ENCODE measurements at regions of chr17 and their contacts with region 1.

Region 1: GRCh38 chr17:40191237-40192208 is 14.3 kb downstream of the RAPGEFL1 start:
- DNase-seq: peak; percentile 71
- ATAC-seq: peak; percentile 94
- H3K4me3 Mint-ChIP-seq: peak overlapping the region; percentile 96
- H3K27ac Mint-ChIP-seq: peak overlapping the region; percentile 79
- H3K4me1 Mint-ChIP-seq: peaks cover 15% of the 10 kb centered on the region
- H3K27me3 Mint-ChIP-seq: peaks cover 3% of the 10 kb centered on the region
- CTCF ChIP-seq: peak; percentile 47

Region 2: DNA sequence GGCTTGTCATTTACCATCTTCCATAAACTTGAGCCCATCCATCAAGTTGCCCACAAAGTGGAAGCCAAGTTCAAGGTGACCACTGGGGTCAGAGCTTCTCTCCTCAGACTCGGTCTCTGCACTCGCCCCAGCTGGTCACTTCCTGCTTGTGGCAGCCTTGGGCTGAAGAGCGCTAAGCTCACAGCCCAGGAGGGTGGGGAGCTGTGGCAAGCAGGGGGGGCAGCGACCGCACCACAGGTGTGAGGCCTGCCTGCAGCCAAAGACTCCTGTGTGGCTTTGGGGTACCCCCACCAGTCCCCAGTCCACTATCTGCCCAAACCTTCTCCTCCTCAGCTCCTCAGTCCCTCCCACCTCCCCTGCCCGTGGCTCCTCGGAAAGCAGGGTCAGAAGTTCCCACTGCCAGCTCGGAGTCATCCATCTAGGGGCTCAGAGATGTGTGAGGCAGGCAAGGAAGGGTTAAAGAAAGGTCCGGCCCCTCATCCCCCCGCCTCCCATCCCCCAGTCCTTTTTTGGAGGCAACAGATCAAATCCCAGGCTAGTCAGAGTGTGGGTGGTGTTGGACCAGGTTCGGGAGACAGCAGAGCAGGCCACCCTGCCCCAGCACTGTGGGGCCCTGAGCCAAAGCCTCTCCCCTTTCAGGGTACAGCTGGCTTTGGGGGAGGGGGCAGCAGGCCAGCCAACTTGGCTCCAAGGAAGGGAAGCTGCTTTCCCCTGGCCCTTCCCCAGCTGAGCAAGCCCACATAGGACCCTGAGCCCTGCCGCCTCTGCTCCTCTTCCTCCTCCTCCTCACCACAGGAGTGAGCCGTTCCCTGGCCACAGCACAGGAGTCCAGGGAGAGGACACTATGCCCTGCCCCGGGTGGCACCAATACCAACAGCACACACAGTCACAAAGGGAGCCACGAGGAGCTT is 173.1 kb before region 1 on chr17:
- CTCF ChIA-PET with region 1: interaction called, 5 read pairs
- POLR2A ChIA-PET with region 1: interaction called, 4 read pairs
- intact Hi-C with region 1: loop called (anchors 1 kb)
- DNase-seq: no peak
- ATAC-seq: no peak
- H3K4me3 Mint-ChIP-seq: no peak overlapping the region
- H3K27ac Mint-ChIP-seq: no peak overlapping the region
- H3K4me1 Mint-ChIP-seq: peaks cover 5% of the 10 kb centered on the region
- H3K27me3 Mint-ChIP-seq: peaks cover 2% of the 10 kb centered on the region
- CTCF ChIP-seq: no peak

Region 3: GRCh38 chr17:40062329-40063186 is 129.0 kb before region 1 on chr17 and contains the start of gene THRA:
- CTCF ChIA-PET with region 1: interaction called, 3 read pairs
- POLR2A ChIA-PET with region 1: no interaction called
- intact Hi-C with region 1: loop called (anchors 2 kb)
- DNase-seq: peak; percentile 79
- ATAC-seq: peak; percentile 93
- H3K4me3 Mint-ChIP-seq: peak within 1 kb of the TSS; percentile 87
- H3K27ac Mint-ChIP-seq: peak within 1 kb of the TSS; percentile 78
- H3K4me1 Mint-ChIP-seq: peaks cover 39% of the 10 kb centered on the region
- H3K27me3 Mint-ChIP-seq: peaks cover under 1% of the 10 kb centered on the region
- CTCF ChIP-seq: no peak
- total RNA-seq, gene THRA: 5.4 and 5.9 TPM in 2 replicates

Region 4: GRCh38 chr17:40168262-40168832 is 23.2 kb before region 1 on chr17:
- CTCF ChIA-PET with region 1: interaction called, 15 read pairs
- POLR2A ChIA-PET with region 1: interaction called, 3 read pairs
- intact Hi-C with region 1: no loop called
- DNase-seq: no peak
- ATAC-seq: peak; percentile 85
- H3K4me3 Mint-ChIP-seq: no peak overlapping the region
- H3K27ac Mint-ChIP-seq: no peak overlapping the region
- H3K4me1 Mint-ChIP-seq: no peaks in the 10 kb centered on the region
- H3K27me3 Mint-ChIP-seq: no peaks in the 10 kb centered on the region
- CTCF ChIP-seq: no peak

Region 5: GRCh38 chr17:40177275-40177874 is 14.1 kb before region 1 on chr17 and contains the start of gene RAPGEFL1:
- CTCF ChIA-PET with region 1: interaction called, 3 read pairs
- POLR2A ChIA-PET with region 1: interaction called, 4 read pairs
- intact Hi-C with region 1: loop called (anchors 1 kb)
- DNase-seq: peak; percentile 61
- ATAC-seq: peak; percentile 99
- H3K4me3 Mint-ChIP-seq: peak within 1 kb of the TSS; percentile 42
- H3K27ac Mint-ChIP-seq: no peak within 1 kb of the TSS
- H3K4me1 Mint-ChIP-seq: peaks cover 10% of the 10 kb centered on the region
- H3K27me3 Mint-ChIP-seq: no peaks in the 10 kb centered on the region
- CTCF ChIP-seq: no peak
- total RNA-seq, gene RAPGEFL1: 4.9 and 7.0 TPM in 2 replicates

Region 6: GRCh38 chr17:40203131-40203530 is 11.6 kb after region 1 on chr17:
- CTCF ChIA-PET with region 1: interaction called, 9 read pairs
- POLR2A ChIA-PET with region 1: interaction called, 3 read pairs
- intact Hi-C with region 1: loop called (anchors 1 kb)
- DNase-seq: no peak
- ATAC-seq: no peak
- H3K4me3 Mint-ChIP-seq: no peak overlapping the region
- H3K27ac Mint-ChIP-seq: no peak overlapping the region
- H3K4me1 Mint-ChIP-seq: peaks cover 4% of the 10 kb centered on the region
- H3K27me3 Mint-ChIP-seq: no peaks in the 10 kb centered on the region
- CTCF ChIP-seq: no peak

Region 7: GRCh38 chr17:40219073-40219860 is 27.7 kb after region 1 on chr17 and contains the start of gene WIPF2:
- CTCF ChIA-PET with region 1: interaction called, 13 read pairs
- POLR2A ChIA-PET with region 1: interaction called, 15 read pairs
- intact Hi-C with region 1: no loop called
- DNase-seq: peak; percentile 92
- ATAC-seq: peak; percentile 88
- H3K4me3 Mint-ChIP-seq: peak within 1 kb of the TSS; percentile 97
- H3K27ac Mint-ChIP-seq: peak within 1 kb of the TSS; percentile 100
- H3K4me1 Mint-ChIP-seq: peaks cover 30% of the 10 kb centered on the region
- H3K27me3 Mint-ChIP-seq: no peaks in the 10 kb centered on the region
- CTCF ChIP-seq: no peak
- total RNA-seq, gene WIPF2: 28.4 and 32.9 TPM in 2 replicates

Measured in activated B cell treated with CpG ODN at 0.5 μM for 24 hours (primary cell).